Activated CD4-positive, alpha-beta T cell treated with anti-CD3 and anti-CD28 coated beads, Interleukin-2, amount 10 ng/mL, durations not matched to agents 24 days and 14 days (primary cell): ENCODE measurements at regions of chr14 and their contacts with region 1.

Region 1: DNA sequence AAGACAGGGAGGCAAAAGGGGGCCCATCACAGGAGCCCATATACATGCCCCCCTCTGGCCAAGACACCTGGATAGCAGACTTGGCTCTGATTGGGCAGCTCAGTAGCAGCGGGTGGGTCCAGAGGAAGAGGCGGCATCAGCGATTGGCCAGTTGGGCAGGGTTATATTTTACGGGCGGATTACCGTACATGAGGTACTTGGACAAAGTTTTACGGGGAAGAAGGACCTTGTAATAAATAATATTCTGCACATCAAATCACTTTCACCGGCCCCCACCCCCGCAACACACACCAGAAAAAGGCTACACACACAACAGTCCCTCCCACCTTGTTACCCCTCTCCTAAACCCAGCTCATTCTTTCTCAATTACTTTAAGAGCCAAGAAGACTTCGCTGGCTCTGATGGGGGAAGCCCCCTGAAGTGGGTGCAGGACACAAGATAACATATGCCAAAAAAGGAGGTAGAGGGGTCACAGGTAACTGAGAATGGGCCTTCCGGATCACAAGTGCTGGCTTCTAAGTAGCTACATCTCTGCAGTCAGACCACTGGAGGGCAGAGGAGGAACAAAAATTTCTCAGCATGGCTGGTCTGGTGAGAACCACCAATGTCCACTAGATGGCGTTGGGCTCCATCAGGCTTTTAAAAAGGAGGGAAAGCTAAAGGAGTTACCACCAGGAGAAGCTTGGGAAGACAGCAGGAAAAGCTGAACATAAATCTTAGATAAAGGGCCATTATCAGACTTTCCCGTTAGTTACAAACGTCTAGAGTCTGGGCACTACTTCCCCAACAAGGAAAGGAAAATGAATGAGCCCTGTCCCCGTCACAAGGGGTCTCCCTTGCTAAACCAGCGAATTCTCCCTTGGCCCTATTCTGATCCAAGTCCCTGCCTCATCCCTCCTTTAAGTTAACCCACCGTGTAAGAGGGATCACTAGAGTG is 11.4 kb upstream of the CDH24 start:
- DNase-seq: peak; percentile 93
- H3K4me3 Mint-ChIP-seq: peak overlapping the region; percentile 53
- H3K27ac Mint-ChIP-seq: peak overlapping the region; percentile 44
- H3K4me1 Mint-ChIP-seq: peaks cover 28% of the 10 kb centered on the region
- H3K27me3 Mint-ChIP-seq: no peaks in the 10 kb centered on the region

Region 2: GRCh38 chr14:23110579-23111365 is 42.0 kb after region 1 on chr14:
- intact Hi-C with region 1: loop called (anchors 2 kb)
- DNase-seq: no peak
- H3K4me3 Mint-ChIP-seq: no peak overlapping the region
- H3K27ac Mint-ChIP-seq: no peak overlapping the region
- H3K4me1 Mint-ChIP-seq: peaks cover 8% of the 10 kb centered on the region
- H3K27me3 Mint-ChIP-seq: peaks cover 5% of the 10 kb centered on the region

Region 3: DNA sequence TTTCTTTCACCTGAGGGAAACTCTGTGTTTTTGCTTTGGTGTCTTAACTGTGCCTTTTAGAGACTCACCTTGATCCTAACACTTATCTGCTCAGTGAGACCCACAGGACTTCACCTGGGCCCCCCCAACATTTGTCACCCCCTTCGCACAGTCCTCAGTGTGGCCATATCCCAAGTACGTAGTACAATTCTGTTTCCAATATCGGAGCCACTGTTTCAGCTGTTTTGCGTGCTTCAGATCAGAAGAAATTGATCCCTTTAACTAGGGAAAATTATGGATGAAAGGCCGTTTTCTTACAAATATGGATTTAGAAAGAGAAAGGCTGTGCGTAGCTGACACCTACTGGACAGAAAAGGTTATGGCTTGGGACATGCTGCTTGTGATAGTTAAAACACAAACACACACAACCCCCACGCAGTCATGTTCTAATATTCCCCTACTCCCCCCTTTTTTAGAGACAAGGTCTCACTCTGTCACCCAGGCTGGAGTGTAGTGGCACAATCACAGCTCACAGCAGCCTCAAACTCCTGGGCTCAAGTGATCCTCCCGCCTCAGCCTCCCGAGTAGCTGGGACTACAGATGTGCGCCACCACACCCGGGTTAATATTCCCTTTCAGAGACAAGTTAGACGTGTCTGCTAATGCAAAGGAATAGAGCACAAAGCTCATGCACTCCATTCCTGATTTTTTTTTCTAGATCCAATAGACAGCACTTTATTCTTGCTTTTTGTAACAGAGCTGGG is 118.3 kb after region 1 on chr14:
- intact Hi-C with region 1: loop called (anchors 5 kb)
- DNase-seq: peak; percentile 70
- H3K4me3 Mint-ChIP-seq: no peak overlapping the region
- H3K27ac Mint-ChIP-seq: no peak overlapping the region
- H3K4me1 Mint-ChIP-seq: no peaks in the 10 kb centered on the region
- H3K27me3 Mint-ChIP-seq: peaks cover 25% of the 10 kb centered on the region